ENCODE measurements at regions of chr12 and their contacts with region 1.

Region 1: DNA sequence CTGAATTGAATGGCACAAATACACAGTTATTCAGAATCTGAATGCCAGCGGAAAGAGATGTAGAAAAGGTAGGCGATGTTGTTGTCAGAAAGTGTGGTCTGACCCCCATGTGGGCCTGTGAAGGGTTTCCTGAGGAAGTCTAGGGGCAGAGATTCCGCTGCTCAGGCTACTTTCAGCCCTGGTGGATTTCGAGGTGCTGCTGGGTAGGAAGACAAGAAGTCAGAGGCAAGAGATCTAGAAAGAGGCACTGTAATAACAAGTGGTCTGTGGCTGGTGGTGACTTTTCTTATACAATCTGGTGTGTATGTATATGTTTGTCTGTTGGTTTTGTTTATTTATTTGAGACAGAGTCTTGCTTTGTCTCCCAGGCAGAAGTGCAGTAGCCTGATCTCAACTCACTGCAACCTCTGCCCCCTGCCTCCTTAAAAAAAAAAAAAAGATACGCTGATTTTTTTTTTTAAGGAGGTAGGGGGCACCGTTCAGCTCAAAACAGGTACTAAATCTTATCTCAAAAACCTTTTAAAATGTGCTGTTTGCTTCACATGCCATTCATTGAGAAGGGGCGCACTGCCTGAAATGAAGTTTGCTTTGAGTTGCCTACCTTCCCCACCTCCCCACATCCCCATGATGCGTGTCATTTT is 27.1 kb upstream of the MANSC4 start:
- DNase-seq: no peak
- ATAC-seq: no peak
- H3K4me3 ChIP-seq: no peak overlapping the region
- H3K27ac ChIP-seq: no peak overlapping the region
- H3K4me1 ChIP-seq: no peaks in the 10 kb centered on the region
- H3K27me3 ChIP-seq: no peaks in the 10 kb centered on the region; the same call in 1 of the 2 replicates
- CTCF ChIP-seq: no peak; the same call in 1 of the 2 replicates

Region 2: DNA sequence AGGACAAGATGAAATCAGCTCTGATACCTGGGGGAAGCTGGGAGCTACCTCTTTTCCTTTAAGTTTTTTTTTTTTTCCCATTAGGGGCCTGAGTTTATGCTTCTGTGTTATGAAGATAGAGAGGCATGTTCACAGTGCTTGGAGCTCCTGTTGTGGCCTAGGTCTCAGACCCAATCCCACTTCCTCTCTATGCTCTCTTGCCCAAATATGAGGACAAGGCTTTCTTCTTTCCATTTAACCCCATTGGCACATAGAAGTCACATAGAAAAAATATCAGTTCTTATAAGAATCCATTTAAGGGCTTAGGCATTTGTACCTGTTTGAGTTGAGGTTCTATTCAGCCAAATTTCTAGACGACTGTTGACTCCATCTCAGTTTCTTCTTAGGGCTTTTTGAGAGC is 84.0 kb before region 1 on chr12:
- CTCF ChIA-PET with region 1: no interaction called
- POLR2A ChIA-PET with region 1: interaction called, 10 read pairs
- in situ Hi-C with region 1: no loop called
- intact Hi-C with region 1: no loop called
- DNase-seq: no peak
- ATAC-seq: no peak
- H3K4me3 ChIP-seq: no peak overlapping the region
- H3K27ac ChIP-seq: no peak overlapping the region
- H3K4me1 ChIP-seq: no peaks in the 10 kb centered on the region; the same call in 1 of the 2 replicates
- H3K27me3 ChIP-seq: no peaks in the 10 kb centered on the region
- CTCF ChIP-seq: no peak

Measured in Panc1 (cell line).